Activated naive CD4-positive, alpha-beta T cell treated with anti-CD3 and anti-CD28 coated beads for 36 hours (primary cell): ENCODE measurements at regions of chrX and their contacts with region 1.

Region 1: DNA sequence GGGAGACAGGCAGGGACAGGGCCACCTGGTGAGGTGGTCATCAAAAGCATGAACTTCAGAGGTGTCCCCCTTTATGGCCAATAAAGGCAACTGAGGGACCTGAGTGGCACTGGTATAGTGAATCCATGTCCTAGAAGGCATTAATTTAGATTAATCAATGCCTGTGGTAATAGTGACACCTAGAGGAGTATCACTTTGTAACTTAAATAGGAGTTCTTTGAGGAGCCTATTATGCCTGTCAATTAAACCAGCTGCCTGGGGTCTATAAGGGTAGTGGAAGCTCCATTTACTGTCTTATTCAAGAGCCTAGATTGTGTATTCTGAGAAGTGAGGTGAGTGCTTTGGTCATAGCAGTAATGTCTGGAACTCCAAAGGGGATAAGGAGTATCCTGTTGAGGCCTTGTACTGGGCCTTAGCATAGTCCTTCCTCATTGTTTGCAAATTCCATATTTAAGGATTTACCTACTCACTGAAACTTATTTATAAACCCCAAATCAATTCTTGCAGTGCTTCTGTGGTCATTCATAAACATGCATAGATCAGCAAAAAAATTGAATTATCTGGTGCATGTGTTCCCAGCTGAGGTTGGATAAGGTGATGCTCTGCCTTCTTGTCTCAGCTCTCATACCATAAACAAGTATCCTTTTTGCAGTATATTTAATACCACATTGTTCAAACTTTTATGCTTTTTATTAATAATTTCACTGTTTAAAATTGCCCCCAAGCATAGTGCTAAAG is 213.8 kb upstream of the RADX start:
- DNase-seq: no peak
- H3K4me3 Mint-ChIP-seq: no peak overlapping the region
- H3K27ac Mint-ChIP-seq: no peak overlapping the region
- H3K4me1 Mint-ChIP-seq: no peaks in the 10 kb centered on the region
- H3K27me3 Mint-ChIP-seq: no peaks in the 10 kb centered on the region

Region 2: DNA sequence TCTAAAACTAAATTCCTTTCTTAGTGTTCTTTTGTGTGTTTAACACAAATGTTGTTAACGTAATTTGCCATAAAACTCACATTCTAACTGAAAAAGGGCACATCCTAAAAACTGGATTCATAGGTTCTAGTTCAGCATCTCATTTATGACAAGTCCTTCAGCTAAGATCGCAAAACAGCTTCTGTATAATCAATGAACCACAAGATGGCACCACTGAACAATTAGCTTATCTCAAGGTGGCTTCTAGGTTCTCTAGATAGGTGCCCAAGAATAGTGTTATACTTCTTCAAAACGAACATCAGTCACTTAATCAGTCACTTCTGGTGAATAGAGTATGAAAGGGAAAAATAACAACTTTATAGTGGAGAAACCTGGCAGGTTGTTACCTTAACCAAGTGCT is 521.3 kb before region 1 on chrX:
- CTCF ChIA-PET with region 1: no interaction called
- intact Hi-C with region 1: loop called (anchors 5 kb)
- DNase-seq: no peak
- H3K4me3 Mint-ChIP-seq: no peak overlapping the region
- H3K27ac Mint-ChIP-seq: no peak overlapping the region
- H3K4me1 Mint-ChIP-seq: no peaks in the 10 kb centered on the region
- H3K27me3 Mint-ChIP-seq: no peaks in the 10 kb centered on the region